ENCODE measurements at regions of chr4 and their contacts with region 1.

Region 1: DNA sequence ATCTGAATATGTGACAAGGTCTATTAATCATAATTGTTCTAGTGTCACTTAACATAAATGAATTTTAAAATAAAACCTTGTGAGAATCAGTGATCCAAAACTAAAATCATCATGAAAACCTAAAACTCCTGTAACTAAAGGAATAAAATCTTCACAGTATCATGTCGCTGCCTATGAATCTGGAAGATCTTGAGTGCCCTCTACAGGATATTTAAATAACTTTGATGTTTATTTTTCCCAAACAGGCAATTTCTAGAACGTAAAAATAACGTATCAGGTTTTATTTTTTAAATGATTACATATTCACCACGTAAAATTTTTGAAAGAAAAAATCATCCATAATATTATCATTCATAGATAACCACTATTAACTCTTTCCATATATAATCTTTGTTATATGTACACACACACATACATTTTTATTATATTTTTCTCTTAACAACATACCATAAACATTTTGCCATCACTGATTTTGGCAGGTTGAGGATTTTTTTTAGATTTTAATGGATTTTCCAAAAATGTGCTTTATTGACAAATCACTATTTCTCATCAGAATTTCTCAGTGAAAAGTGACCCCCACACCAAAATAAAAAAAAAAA is 79.6 kb downstream of the COMMD8 start:
- DNase-seq: no peak
- ATAC-seq: no peak
- H3K4me3 ChIP-seq: no peak overlapping the region
- H3K27ac ChIP-seq: no peak overlapping the region
- H3K4me1 ChIP-seq: no peaks in the 10 kb centered on the region
- H3K27me3 ChIP-seq: no peaks in the 10 kb centered on the region
- CTCF ChIP-seq: peak; percentile 49; the same call in 1 of the 2 replicates

Region 2: DNA sequence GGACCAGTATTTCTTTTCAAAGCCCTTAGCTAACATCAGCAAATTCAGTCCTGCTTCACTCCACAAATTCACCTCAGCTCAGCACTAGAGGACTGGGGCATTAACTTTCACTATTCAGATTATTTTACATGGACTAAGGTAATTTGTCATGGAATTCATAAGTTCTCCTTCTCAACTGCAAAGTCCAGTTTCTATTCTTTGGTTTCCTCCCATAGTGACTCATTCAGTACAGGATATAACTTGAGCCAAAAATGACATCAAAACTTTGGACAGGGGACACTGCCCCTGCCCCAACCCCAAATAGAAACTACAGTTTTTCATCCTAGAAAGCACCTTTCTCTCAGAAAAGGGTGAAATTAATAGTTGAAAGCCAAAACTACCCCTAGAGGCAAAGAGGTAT is 527.6 kb before region 1 on chr4:
- CTCF ChIA-PET with region 1: no interaction called
- POLR2A ChIA-PET with region 1: no interaction called
- in situ Hi-C with region 1: no loop called
- intact Hi-C with region 1: loop called (anchors 10 kb)
- DNase-seq: no peak
- ATAC-seq: no peak
- H3K4me3 ChIP-seq: no peak overlapping the region
- H3K27ac ChIP-seq: no peak overlapping the region
- H3K4me1 ChIP-seq: no peaks in the 10 kb centered on the region
- H3K27me3 ChIP-seq: no peaks in the 10 kb centered on the region
- CTCF ChIP-seq: no peak

Region 3: GRCh38 chr4:47167081-47168035 is 216.6 kb before region 1 on chr4:
- CTCF ChIA-PET with region 1: interaction called, 14 read pairs
- POLR2A ChIA-PET with region 1: no interaction called
- in situ Hi-C with region 1: no loop called
- intact Hi-C with region 1: no loop called
- DNase-seq: no peak
- ATAC-seq: no peak
- H3K4me3 ChIP-seq: no peak overlapping the region
- H3K27ac ChIP-seq: no peak overlapping the region
- H3K4me1 ChIP-seq: no peaks in the 10 kb centered on the region
- H3K27me3 ChIP-seq: no peaks in the 10 kb centered on the region
- CTCF ChIP-seq: no peak

Region 4: DNA sequence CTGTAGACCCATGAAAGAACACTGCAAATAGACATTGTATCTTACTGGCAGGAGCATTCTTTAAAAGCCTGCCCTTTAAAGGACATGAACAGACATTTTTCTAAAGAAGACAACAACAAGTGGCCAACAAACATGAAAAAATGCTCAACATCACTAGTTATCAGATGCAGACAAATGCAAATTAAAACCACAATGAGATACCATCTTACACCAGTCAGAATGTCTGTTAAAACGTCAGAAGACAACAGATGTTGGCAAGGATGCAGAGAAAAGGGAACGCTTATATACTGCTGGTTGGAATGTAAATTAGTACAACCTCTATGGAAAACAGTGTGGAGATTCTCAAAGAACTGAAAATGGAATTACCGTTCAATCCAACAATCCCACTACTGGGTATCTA is 178.4 kb after region 1 on chr4:
- CTCF ChIA-PET with region 1: no interaction called
- POLR2A ChIA-PET with region 1: no interaction called
- in situ Hi-C with region 1: no loop called
- intact Hi-C with region 1: no loop called
- DNase-seq: no peak
- ATAC-seq: no peak
- H3K4me3 ChIP-seq: no peak overlapping the region
- H3K27ac ChIP-seq: no peak overlapping the region
- H3K4me1 ChIP-seq: no peaks in the 10 kb centered on the region; the same call in 1 of the 2 replicates
- H3K27me3 ChIP-seq: no peaks in the 10 kb centered on the region
- CTCF ChIP-seq: no peak

Region 5: GRCh38 chr4:47577779-47578553 is 194.0 kb after region 1 on chr4:
- CTCF ChIA-PET with region 1: no interaction called
- POLR2A ChIA-PET with region 1: no interaction called
- in situ Hi-C with region 1: no loop called
- intact Hi-C with region 1: no loop called
- DNase-seq: no peak
- ATAC-seq: no peak
- H3K4me3 ChIP-seq: no peak overlapping the region
- H3K27ac ChIP-seq: no peak overlapping the region
- H3K4me1 ChIP-seq: no peaks in the 10 kb centered on the region
- H3K27me3 ChIP-seq: no peaks in the 10 kb centered on the region
- CTCF ChIP-seq: no peak

Measured in Panc1 (cell line).